ENCODE measurements at regions of chr1 and their contacts with region 1.

Region 1: GRCh38 chr1:234772345-234773147 is 162.6 kb upstream of the IRF2BP2 start:
- DNase-seq: peak; percentile 63 to 93 (median 81)
- H3K4me3 ChIP-seq: peak overlapping the region; percentile 16
- H3K4me3 Mint-ChIP-seq: peak overlapping the region; percentile 55 to 91 (median 81)
- H3K27ac ChIP-seq: peak overlapping the region; percentile 58
- H3K27ac Mint-ChIP-seq: peak overlapping the region; percentile 91 to 99 (median 95)
- H3K4me1 ChIP-seq: peaks cover 53% of the 10 kb centered on the region
- H3K4me1 Mint-ChIP-seq: peaks cover 51 to 62% (median 56%) of the 10 kb centered on the region in 3 donors
- H3K27me3 ChIP-seq: peaks cover 5% of the 10 kb centered on the region
- H3K27me3 Mint-ChIP-seq: no peaks in the 10 kb centered on the region

Region 2: DNA sequence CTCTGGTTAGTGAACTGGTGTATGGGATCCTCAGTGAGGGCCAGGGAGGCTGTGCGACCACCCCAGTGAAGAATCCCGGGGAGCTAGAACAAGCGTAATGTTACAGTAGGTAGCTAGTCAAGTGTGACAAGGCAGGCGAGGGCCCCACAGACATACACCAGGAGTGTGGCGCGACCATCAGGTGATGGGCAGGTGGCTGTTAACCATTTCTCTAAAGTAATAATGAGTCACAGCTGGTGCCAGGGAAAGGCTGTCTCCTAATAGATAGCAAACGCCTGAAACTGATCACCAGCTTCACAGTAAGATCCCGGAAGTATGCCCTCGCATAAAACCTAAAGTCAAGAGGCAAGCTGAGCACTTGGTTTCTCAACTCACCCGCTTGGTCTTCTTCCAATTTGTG is 253.0 kb before region 1 on chr1:
- CTCF ChIA-PET with region 1: no interaction called
- POLR2A ChIA-PET with region 1: no interaction called
- DNase-seq: no peak
- H3K4me3 ChIP-seq: no peak overlapping the region
- H3K4me3 Mint-ChIP-seq: no peak overlapping the region
- H3K27ac ChIP-seq: no peak overlapping the region
- H3K27ac Mint-ChIP-seq: no peak overlapping the region
- H3K4me1 ChIP-seq: peaks cover 15% of the 10 kb centered on the region
- H3K4me1 Mint-ChIP-seq: no peaks in the 10 kb centered on the region
- H3K27me3 ChIP-seq: no peaks in the 10 kb centered on the region
- H3K27me3 Mint-ChIP-seq: peaks cover 4% of the 10 kb centered on the region in 2 donors

Region 3: GRCh38 chr1:234722904-234723720 is 49.4 kb before region 1 on chr1:
- CTCF ChIA-PET with region 1: no interaction called
- POLR2A ChIA-PET with region 1: interaction called, 33 read pairs
- DNase-seq: peak in 2 of 5 donors; percentile 15 to 70
- H3K4me3 ChIP-seq: peak overlapping the region; percentile 57
- H3K4me3 Mint-ChIP-seq: peak overlapping the region; percentile 69 to 92 (median 80)
- H3K27ac ChIP-seq: peak overlapping the region; percentile 96
- H3K27ac Mint-ChIP-seq: peak overlapping the region; percentile 90 to 100 (median 98)
- H3K4me1 ChIP-seq: peaks cover 63% of the 10 kb centered on the region
- H3K4me1 Mint-ChIP-seq: peaks cover 53 to 64% (median 61%) of the 10 kb centered on the region in 3 donors
- H3K27me3 ChIP-seq: no peaks in the 10 kb centered on the region
- H3K27me3 Mint-ChIP-seq: peaks cover 0 to 3% of the 10 kb centered on the region in 2 donors